ENCODE measurements at regions of chr9 and their contacts with region 1.

Region 1: DNA sequence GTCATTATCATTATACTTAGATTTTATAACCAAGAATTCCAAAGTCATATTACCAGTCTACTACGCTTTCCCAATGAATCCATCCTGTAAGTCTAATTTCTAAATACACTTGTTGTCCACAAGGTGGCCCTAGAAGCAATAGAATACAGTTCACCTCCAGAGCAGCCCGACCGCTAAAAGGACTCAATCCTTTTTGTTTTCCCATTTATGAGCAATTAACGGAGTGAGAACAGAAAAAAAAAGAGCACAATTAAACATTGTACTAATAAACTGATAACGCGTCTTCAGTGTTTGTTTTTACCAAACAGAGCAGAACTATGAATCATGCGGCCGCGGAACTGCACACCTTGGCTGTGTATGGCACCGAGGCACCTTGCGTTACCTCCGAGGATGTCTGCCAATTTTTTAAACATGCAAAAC is 160.7 kb upstream of the DAPK1 start:
- DNase-seq: peak; percentile 71
- H3K4me3 ChIP-seq: no peak overlapping the region
- H3K27ac ChIP-seq: no peak overlapping the region
- H3K4me1 ChIP-seq: no peaks in the 10 kb centered on the region
- CTCF ChIP-seq: peak; percentile 87

Region 2: GRCh38 chr9:87193925-87194868 is 142.7 kb before region 1 on chr9:
- CTCF ChIA-PET with region 1: no interaction called
- POLR2A ChIA-PET with region 1: no interaction called
- intact Hi-C with region 1: no loop called
- DNase-seq: no peak
- H3K4me3 ChIP-seq: no peak overlapping the region
- H3K27ac ChIP-seq: no peak overlapping the region
- H3K4me1 ChIP-seq: no peaks in the 10 kb centered on the region
- CTCF ChIP-seq: no peak

Region 3: GRCh38 chr9:87541663-87542062 is 204.7 kb after region 1 on chr9:
- CTCF ChIA-PET with region 1: no interaction called
- POLR2A ChIA-PET with region 1: no interaction called
- intact Hi-C with region 1: no loop called
- DNase-seq: no peak
- H3K4me3 ChIP-seq: no peak overlapping the region
- H3K27ac ChIP-seq: no peak overlapping the region
- H3K4me1 ChIP-seq: peaks cover 12% of the 10 kb centered on the region
- CTCF ChIP-seq: no peak

Region 4: DNA sequence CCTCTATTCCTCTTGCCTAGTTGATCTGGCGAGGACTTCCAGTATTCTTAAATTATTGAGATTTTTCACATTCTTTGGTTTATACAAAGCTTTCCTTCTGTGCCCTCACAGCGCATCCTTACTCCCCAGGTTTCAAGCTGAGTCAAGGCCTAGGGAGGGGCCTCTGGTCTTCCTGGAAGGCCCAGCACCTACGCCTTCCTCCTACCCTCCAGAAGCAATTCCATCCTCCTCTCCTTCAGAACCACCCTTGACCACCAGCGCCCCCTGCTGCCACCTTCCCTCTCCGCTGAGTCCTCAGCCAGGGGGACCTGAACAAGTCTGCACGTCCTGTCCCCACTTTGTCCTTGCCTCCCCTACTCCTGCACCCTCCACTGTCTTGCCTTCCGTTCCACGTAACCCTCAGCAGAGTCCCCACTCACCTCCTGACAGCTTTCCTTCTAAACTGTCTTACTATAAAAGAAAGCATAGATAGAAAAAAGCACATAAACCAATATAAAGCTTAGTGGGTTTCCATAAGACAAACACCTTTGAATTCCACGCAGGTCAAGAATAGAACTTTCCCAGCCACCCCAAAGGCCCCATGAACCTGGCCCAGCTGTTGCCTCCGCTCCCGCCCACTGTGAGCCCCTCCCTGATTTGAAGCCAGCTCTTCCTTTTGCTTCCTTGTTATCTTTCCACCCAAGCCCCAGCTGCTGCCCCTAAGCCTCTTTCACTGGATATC is 326.0 kb after region 1 on chr9:
- CTCF ChIA-PET with region 1: interaction called, 3 read pairs
- POLR2A ChIA-PET with region 1: interaction called, 3 read pairs
- intact Hi-C with region 1: loop called (anchors 1 kb)
- DNase-seq: peak; percentile 60
- H3K4me3 ChIP-seq: no peak overlapping the region
- H3K27ac ChIP-seq: no peak overlapping the region
- H3K4me1 ChIP-seq: peaks cover 7% of the 10 kb centered on the region
- CTCF ChIP-seq: peak; percentile 82